PC-9 (cell line): ENCODE measurements at regions of chr11 and their contacts with region 1.

Region 1: GRCh38 chr11:101718402-101718801 is 134.6 kb upstream of the TRPC6 start:
- DNase-seq: no peak
- H3K4me3 ChIP-seq: no peak overlapping the region
- H3K27ac ChIP-seq: no peak overlapping the region
- H3K4me1 ChIP-seq: no peaks in the 10 kb centered on the region
- H3K27me3 ChIP-seq: no peaks in the 10 kb centered on the region
- CTCF ChIP-seq: no peak

Region 2: DNA sequence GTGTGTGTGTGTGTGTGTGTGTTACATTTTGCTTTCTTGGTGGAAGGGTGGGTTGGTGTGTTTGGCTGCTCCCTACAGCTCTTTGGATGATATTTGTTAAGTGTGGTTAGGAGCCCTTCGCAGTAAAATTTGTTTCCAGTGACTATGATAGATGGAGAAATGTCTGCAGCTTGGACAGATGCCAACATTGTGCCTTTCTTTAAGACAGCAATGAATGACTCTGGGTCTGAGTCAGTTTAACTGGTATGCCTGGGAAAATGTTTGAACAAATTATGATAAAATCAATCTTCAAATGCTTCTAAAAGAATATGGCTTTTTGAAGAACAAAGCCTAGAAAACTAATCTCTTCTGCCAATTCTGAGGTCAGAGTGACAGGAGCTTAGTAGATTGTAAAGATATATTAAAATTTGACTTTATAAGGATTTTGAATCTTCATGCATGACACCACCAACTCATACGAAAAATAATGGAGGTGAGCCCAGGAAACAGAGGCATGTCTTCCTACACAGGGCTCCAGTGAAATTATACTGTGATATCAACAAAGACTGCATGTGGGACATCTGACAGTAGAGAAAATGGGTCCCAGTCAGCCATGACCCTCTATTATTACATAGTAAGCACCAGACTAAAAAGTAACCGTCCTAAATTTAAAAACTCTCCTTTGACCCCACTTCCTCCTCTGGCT is 31.7 kb before region 1 on chr11:
- CTCF ChIA-PET with region 1: no interaction called
- POLR2A ChIA-PET with region 1: interaction called, 11 read pairs
- intact Hi-C with region 1: no loop called
- DNase-seq: peak; percentile 56 to 82
- H3K4me3 ChIP-seq: no peak overlapping the region
- H3K27ac ChIP-seq: peak overlapping the region; percentile 51
- H3K4me1 ChIP-seq: peaks cover 13% of the 10 kb centered on the region
- H3K27me3 ChIP-seq: no peaks in the 10 kb centered on the region
- CTCF ChIP-seq: no peak

Region 3: GRCh38 chr11:101741479-101742175 is 23.2 kb after region 1 on chr11:
- CTCF ChIA-PET with region 1: no interaction called
- POLR2A ChIA-PET with region 1: interaction called, 10 read pairs
- intact Hi-C with region 1: no loop called
- DNase-seq: no peak
- H3K4me3 ChIP-seq: no peak overlapping the region
- H3K27ac ChIP-seq: no peak overlapping the region
- H3K4me1 ChIP-seq: no peaks in the 10 kb centered on the region
- H3K27me3 ChIP-seq: no peaks in the 10 kb centered on the region
- CTCF ChIP-seq: no peak

Region 4: DNA sequence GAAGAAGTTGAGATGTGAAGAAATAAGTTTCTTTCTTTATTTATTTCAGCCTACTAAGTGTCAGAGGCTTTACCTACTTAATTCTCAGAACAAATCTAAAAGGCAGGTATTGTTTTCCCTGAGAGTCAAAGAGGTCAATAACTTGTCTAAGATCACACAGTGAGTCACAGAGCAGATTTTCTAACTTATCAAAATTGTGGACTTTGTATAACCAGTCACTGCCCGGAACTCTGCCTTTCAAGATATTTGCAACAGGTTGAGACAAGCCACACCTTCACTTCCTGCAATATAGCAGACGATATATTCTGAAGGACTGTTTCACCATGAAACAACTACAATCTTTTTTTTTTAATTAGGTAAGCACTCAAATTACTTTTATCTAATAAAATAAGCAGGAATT is 1135.6 kb after region 1 on chr11:
- CTCF ChIA-PET with region 1: no interaction called
- POLR2A ChIA-PET with region 1: no interaction called
- intact Hi-C with region 1: no loop called
- DNase-seq: no peak
- H3K4me3 ChIP-seq: no peak overlapping the region
- H3K27ac ChIP-seq: no peak overlapping the region
- H3K4me1 ChIP-seq: peaks cover 28% of the 10 kb centered on the region
- H3K27me3 ChIP-seq: no peaks in the 10 kb centered on the region
- CTCF ChIP-seq: no peak